Astrocyte of the cerebellum (primary cell): ENCODE measurements at regions of chr21 and their contacts with region 1.

Region 1: GRCh38 chr21:43864313-43864961 is 586 bp upstream of the AGPAT3 start:
- DNase-seq: no peak
- H3K4me3 ChIP-seq: peak overlapping the region; percentile 63
- CTCF ChIP-seq: no peak

Region 2: DNA sequence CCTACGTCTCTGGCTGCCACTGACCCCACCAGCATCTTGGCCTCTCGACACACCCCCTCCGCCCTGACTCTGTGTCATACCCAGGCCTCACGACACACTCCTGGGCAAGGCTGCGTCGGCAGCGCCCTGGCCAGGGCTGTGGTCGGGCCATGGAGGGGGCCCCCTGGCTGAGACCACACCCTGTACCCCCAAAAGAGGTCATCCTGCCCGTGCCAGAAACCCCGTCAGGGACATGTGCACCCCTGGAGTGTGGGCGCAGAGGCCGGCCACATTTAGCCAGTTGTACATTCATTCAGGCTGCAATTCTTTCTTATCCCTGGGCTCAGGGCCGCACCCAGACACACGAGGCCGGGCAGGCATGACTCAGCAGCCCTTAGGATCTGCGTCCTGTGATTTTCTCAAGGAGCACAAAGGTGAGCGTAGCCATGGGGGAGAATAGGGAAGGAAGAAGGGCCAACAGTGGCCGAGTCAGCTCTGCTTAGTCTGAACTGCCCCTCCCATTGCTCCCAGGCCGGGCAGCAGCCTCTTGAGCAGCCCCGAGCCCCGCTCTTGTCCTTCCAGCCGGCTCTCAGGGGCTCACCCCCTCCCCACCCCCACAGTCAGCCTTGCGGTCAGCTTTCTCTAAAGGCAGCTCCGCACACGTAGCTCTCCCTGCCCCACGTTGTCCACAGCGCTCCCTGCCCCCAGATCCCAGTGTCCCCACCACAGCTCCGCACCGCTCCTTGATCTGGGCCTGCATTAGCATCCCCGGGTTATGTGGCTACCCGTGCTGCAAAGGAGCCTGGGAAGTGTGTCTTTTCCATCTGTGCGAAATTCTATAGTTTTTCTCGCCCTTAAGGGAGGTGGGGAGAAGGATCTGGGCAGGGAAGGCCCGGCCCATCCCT is 96.2 kb before region 1 on chr21:
- in situ Hi-C with region 1: loop called (anchors 25 kb)
- DNase-seq: no peak
- H3K4me3 ChIP-seq: no peak overlapping the region
- CTCF ChIP-seq: no peak

Region 3: DNA sequence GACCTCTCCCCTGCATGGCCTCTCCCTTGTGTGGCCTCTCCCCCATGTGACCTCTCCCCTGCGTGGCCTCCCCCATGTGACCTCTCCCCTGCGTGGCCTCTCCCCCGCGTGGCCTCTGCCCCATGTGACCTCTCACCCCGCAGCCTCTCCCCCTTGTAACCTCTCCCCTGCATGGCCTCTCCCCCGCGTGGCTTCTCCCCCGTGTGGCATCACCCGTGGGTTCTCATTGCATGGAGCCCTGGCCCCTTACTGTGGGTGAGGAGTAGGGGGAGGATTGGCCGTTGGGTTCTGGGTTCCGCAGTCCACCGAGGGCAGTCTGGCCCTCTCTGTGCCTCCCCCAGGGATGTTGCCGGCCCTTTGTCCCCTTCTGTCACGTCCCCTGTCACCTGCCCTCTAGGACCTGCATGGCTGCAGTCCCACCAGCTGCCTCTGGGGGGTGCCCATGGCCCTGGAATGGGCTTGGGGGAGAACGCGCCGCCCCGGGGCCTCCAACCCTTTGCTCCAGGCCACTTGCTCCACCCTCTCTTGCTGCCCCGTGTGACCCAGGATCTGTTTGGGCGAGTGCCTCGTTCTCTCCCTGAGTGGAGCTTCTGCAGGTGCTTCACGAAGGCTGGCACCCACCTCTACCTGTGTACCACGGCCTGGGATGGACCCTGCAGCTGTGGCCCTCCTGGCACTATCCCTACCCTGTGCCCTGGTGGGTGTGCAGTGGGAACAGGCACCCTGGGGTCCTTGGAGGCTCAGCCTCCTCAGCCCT is 53.8 kb before region 1 on chr21:
- in situ Hi-C with region 1: no loop called
- DNase-seq: no peak
- H3K4me3 ChIP-seq: no peak overlapping the region
- CTCF ChIP-seq: peak; percentile 97

Region 4: GRCh38 chr21:43916691-43917514 is 52.5 kb after region 1 on chr21:
- in situ Hi-C with region 1: loop called (anchors 10 kb)
- DNase-seq: no peak
- H3K4me3 ChIP-seq: peak overlapping the region; percentile 7
- CTCF ChIP-seq: no peak